H1 (cell line): ENCODE measurements at regions of chr22 and their contacts with region 1.

Region 1: DNA sequence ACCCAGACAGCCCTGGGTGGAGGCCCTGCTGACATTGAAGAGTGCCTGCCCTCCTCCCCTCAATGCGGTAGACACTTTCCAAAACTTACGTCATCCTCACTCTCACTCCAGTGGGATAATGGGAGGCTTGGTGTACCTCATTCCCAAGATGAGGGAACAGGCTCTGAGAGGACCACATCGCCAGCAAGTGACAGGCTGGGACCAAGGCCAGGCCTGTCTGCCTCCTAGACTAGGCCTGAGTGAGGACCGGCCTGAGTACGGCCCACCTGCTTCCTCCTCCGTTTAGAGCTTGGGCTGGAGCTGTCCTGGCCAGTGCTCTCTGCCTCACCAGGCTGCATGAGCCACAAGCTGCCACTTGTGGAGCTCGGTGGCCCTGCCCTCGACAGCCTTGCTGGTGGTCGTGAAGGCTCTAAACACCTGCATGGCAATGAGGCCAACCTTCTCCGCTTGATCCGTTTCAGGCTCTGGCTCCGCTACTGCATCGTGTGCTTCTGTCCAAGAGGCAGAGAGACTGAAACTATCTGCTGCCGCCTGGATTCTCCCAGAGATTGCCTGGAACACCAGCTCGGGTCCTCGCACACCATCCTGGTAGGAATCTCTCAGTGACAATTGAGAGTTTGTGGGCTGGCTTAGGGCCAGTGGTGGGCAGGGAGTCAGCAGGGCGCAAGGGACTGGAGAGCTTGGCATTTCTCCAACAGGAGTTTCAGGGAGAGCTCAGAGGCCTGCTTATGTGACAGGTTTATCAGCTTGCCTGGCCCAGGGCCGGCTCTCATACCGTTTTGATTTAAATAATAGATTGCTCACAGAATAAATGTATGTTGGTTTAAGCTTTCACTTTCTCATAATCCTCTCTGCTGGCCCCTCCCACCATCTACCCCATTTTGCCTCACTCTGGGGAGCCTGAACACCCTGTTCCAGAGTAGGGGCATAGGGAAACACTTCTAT is 9.4 kb downstream of the LRRC75B start:
- DNase-seq: no peak
- H3K4me3 ChIP-seq: no peak overlapping the region
- H3K27ac ChIP-seq: no peak overlapping the region
- H3K4me1 ChIP-seq: no peaks in the 10 kb centered on the region
- H3K27me3 ChIP-seq: no peaks in the 10 kb centered on the region
- CTCF ChIP-seq: no peak
- EP300 ChIP-seq: no peak
- POLR2A ChIP-seq: no peak
- RAD21 ChIP-seq: no peak

Region 2: DNA sequence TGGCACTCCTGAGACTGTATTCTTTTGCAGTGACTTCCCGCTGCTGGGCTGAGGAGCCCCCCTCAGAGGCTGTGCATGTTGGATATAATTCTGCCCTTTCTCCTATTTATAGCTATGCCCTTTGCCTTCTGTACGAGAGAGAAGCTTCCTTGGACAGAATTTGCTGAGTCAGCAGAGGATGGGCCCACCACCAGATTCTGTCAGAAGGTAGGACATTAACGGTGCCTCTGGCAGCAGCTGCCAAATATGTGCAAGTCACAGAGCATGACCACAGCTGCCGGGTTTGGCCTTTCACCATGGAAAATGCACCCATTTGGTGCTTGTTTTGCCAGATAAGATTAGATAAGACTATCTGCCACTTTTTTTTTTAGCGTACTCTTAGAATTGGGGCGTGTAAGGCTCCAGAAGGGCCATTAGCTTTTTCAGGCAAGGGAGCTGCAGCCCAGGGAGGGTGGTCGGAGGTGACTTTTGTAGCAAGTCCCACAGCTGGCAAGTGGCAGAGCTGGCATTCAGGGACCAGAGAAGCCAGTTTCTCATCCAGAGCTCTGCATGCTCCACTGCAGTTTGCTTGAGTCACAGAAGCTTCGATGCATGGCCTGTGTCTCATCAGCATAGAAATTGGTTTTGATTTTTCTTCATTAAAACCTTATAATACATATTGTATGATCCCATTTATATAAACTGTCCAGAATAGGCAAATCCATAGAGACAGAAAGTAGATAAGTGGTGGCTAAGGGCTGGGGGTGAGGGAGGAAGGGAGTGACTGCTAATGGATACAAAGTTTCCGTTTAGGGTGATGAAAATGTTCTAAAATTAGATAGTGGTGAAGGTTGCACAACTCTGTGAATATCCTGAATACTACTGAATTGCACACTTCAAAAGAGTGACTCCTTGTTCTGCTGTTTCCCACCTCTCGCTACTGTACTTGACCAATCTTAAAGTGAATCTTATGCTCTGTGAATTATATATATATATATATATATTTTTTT is 72.6 kb before region 1 on chr22:
- CTCF ChIA-PET with region 1: no interaction called
- POLR2A ChIA-PET with region 1: no interaction called
- DNase-seq: no peak
- H3K4me3 ChIP-seq: no peak overlapping the region
- H3K27ac ChIP-seq: no peak overlapping the region
- H3K4me1 ChIP-seq: peaks cover 0 to 13% (median 9%) of the 10 kb centered on the region in 4 experiments; a peak in 4 of 7 replicates
- H3K27me3 ChIP-seq: no peaks in the 10 kb centered on the region
- CTCF ChIP-seq: no peak
- EP300 ChIP-seq: no peak
- POLR2A ChIP-seq: no peak
- RAD21 ChIP-seq: no peak

Region 3: DNA sequence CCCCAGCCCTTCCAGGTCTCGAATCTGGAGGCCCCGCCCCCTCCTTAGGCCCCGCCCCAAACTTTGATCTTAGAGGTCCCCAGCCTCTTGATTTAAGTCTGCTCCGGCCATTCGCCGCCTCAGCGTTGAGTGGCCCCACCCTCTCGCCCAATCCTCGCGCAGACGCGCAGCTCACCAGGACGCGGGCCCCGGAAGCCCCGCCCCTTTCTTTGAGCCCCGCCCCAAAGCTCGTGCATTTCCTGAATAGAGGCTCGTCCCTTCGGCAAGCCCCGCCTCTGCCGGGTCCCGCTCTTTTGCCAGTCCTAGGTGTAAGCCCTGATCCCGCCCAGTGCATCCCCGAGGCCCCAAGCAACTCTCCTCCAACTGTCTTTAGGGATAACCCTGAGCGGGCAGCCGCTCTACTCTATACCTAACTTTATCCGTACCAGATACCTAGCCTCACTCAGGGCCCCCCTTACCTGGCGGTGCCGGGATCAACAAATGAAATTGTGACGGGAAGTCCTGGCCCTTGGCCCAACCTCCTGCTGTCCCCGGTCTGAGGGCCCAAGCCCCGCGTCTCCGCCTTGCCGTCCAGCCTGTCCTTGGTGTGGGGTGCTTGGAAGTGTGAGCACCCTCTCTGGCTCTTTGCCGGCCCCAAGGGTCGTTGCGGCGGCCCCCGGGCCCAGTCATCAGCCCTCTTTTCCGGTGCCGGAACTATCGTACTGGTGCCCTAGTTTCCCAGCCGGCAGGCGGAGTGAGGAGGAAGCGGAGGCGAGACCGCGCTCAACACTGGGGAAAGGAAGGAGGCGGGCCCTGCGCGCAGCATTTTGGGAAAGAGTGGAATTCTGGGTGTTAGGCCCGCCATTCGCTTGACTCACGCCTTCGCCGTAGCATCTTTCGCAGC is 28.1 kb before region 1 on chr22 and contains the start of gene SNRPD3:
- CTCF ChIA-PET with region 1: interaction called, 3 read pairs
- POLR2A ChIA-PET with region 1: interaction called, 18 read pairs
- DNase-seq: peak; percentile 98 to 99
- H3K4me3 ChIP-seq: peak within 1 kb of the TSS; percentile 96 to 100 (median 100)
- H3K27ac ChIP-seq: peak within 1 kb of the TSS; percentile 95
- H3K4me1 ChIP-seq: peaks cover 0 to 16% (median 3%) of the 10 kb centered on the region in 4 experiments; a peak in 6 of 7 replicates
- H3K27me3 ChIP-seq: no peaks in the 10 kb centered on the region; a peak in 1 of 7 replicates
- CTCF ChIP-seq: no peak
- EP300 ChIP-seq: peak in 1 of 2 experiments; percentile 76; a peak in 1 of 3 replicates
- POLR2A ChIP-seq: peak; percentile 56 to 67; a peak in 1 of 3 replicates
- RAD21 ChIP-seq: no peak
- total RNA-seq, gene SNRPD3: 200 TPM in 2 replicates

Region 4: GRCh38 chr22:24564376-24565058 is 19.0 kb before region 1 on chr22:
- CTCF ChIA-PET with region 1: interaction called, 3 read pairs
- POLR2A ChIA-PET with region 1: interaction called, 13 read pairs
- DNase-seq: no peak
- H3K4me3 ChIP-seq: no peak overlapping the region
- H3K27ac ChIP-seq: no peak overlapping the region
- H3K4me1 ChIP-seq: no peaks in the 10 kb centered on the region
- H3K27me3 ChIP-seq: no peaks in the 10 kb centered on the region
- CTCF ChIP-seq: no peak
- EP300 ChIP-seq: no peak
- POLR2A ChIP-seq: no peak
- RAD21 ChIP-seq: no peak

Region 5: GRCh38 chr22:24571266-24571665 is 12.2 kb before region 1 on chr22:
- CTCF ChIA-PET with region 1: interaction called, 3 read pairs
- POLR2A ChIA-PET with region 1: interaction called, 23 read pairs
- DNase-seq: no peak
- H3K4me3 ChIP-seq: no peak overlapping the region
- H3K27ac ChIP-seq: no peak overlapping the region
- H3K4me1 ChIP-seq: no peaks in the 10 kb centered on the region
- H3K27me3 ChIP-seq: no peaks in the 10 kb centered on the region
- CTCF ChIP-seq: no peak
- EP300 ChIP-seq: no peak
- POLR2A ChIP-seq: no peak
- RAD21 ChIP-seq: no peak

Region 6: GRCh38 chr22:24723111-24723510 is 139.6 kb after region 1 on chr22:
- CTCF ChIA-PET with region 1: no interaction called
- POLR2A ChIA-PET with region 1: no interaction called
- DNase-seq: no peak
- H3K4me3 ChIP-seq: no peak overlapping the region
- H3K27ac ChIP-seq: no peak overlapping the region
- H3K4me1 ChIP-seq: no peaks in the 10 kb centered on the region
- H3K27me3 ChIP-seq: no peaks in the 10 kb centered on the region
- CTCF ChIP-seq: no peak
- EP300 ChIP-seq: no peak
- POLR2A ChIP-seq: no peak
- RAD21 ChIP-seq: no peak

Region 7: GRCh38 chr22:24744638-24745037 is 161.1 kb after region 1 on chr22:
- CTCF ChIA-PET with region 1: no interaction called
- POLR2A ChIA-PET with region 1: no interaction called
- DNase-seq: no peak
- H3K4me3 ChIP-seq: no peak overlapping the region
- H3K27ac ChIP-seq: no peak overlapping the region
- H3K4me1 ChIP-seq: no peaks in the 10 kb centered on the region
- H3K27me3 ChIP-seq: no peaks in the 10 kb centered on the region
- CTCF ChIP-seq: no peak
- EP300 ChIP-seq: no peak
- POLR2A ChIP-seq: no peak
- RAD21 ChIP-seq: no peak